ENCODE measurements at regions of chr9 and their contacts with region 1.

Region 1: DNA sequence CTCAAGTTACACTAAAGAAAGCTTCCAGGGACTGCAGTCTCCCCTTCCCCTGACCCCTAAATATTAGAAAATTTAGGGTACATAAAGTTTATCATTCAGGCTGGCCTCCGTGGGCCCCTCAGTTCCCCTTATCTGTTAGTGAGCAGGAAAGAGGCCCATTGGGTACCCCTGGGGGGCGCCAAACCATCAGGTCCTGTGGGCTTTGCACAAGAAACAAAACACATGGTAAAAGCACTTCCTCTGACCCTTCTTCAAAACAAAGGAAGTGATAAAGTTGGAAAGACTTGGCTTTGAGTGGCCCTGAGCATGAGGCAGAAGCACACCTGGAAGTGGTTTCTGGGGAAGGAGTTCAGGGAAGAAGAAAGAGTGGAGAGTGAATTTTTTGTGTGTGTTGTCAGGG is 213.0 kb downstream of the SMARCA2 start:
- DNase-seq: no peak
- H3K4me3 ChIP-seq: no peak overlapping the region
- H3K27ac ChIP-seq: no peak overlapping the region
- H3K4me1 ChIP-seq: peaks cover 36% of the 10 kb centered on the region
- H3K27me3 ChIP-seq: no peaks in the 10 kb centered on the region
- CTCF ChIP-seq: peak; percentile 43

Region 2: DNA sequence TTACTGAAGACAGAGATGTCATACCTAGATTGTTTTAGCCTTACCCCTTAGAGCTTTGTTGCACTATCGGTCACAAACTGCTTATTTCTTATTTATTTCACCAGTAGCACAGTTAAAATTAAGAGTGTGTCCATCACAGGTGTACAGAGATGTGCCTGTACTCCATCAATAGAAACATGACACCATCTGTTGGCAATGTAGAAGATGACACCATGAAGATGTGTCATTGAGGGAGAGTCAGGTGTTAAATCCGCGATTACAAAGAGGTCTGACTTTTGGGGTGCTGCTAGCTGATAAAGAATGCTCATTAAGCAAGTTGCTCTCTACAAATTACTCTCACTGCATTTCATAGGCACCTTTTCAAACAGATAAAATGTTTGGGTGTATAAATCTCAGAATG is 48.6 kb before region 1 on chr9:
- intact Hi-C with region 1: loop called (anchors 5 kb)
- DNase-seq: no peak
- H3K4me3 ChIP-seq: no peak overlapping the region
- H3K27ac ChIP-seq: no peak overlapping the region
- H3K4me1 ChIP-seq: peaks cover 28% of the 10 kb centered on the region
- H3K27me3 ChIP-seq: no peaks in the 10 kb centered on the region
- CTCF ChIP-seq: no peak